ENCODE measurements at regions of chrX and their contacts with region 1.

Region 1: GRCh38 chrX:120250522-120251271 is at the start of gene ZBTB33:
- DNase-seq: peak; percentile 87
- H3K4me3 Mint-ChIP-seq: peak within 1 kb of the TSS; percentile 93
- H3K27ac Mint-ChIP-seq: peak within 1 kb of the TSS; percentile 94
- H3K4me1 Mint-ChIP-seq: peaks cover 29% of the 10 kb centered on the region
- H3K27me3 Mint-ChIP-seq: no peaks in the 10 kb centered on the region
- total RNA-seq, gene ZBTB33: 17.9 to 19.5 TPM

Region 2: DNA sequence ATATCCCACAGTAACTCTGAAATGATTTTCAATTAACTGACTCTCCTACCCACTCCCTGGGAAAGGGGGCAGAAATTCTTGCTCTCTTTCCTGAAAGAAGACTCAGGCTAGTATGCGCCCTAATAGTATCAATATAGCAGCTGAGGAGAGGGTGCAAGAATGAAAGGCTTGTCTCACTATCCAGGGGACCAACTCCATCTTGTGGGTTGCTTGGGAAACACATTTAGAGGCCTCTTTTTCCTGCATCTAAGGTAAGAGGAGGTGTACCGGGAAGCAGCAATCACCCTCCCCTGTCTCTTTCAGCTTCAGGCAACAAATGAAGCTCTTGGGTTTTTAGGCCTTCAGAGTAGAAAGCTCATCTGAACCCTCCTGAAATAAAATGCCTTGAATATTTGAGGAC is 49.2 kb after region 1 on chrX:
- CTCF ChIA-PET with region 1: interaction called, 10 read pairs
- POLR2A ChIA-PET with region 1: interaction called, 9 read pairs
- DNase-seq: no peak
- H3K4me3 Mint-ChIP-seq: no peak overlapping the region
- H3K27ac Mint-ChIP-seq: no peak overlapping the region
- H3K4me1 Mint-ChIP-seq: peaks cover 32% of the 10 kb centered on the region
- H3K27me3 Mint-ChIP-seq: no peaks in the 10 kb centered on the region

Region 3: DNA sequence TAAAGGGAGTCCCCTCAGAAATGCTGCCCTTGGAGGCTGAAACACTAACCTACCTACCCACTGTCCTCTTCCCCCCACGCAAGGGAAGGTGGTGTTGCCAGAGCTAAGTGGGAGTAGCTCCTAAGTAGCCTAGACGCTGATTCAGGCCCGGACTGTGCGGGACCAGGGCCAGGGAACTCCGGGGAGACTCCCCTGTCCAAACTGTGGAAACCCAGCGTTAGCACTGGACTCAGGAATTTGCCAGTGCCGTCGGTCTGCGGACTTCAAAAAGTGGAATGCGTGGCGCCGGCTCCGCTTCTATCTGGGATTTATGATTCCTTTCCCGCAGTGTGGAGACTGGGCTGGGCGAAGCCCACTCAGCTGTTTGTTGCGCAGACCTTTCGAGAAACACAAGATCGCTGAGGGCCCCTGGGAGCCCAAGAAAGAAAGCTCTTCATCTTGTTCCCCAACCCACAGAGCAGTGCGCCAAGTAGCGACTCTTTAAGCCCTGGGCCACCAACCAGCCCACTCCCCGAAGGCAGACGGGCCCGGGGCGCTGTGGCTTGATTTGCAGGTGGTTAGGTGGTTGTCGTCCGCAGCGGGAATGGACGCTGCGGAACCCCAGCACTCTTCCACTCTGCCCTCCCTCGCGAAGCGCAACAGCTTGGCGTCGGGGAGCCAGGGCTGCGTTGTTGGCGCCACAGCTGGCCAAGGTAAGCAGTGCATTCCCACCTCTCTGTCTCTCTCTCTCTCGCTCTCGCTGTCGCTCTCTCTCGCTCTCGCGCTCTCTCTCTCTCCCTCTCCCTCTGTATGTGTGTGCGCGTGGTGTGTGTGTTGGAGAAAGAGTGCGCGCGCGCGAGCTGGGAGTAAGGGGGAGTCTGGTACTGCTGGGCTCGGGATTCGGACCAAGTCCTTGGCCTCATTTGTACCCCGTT is 58.5 kb after region 1 on chrX:
- CTCF ChIA-PET with region 1: interaction called, 15 read pairs
- POLR2A ChIA-PET with region 1: interaction called, 16 read pairs
- DNase-seq: peak; percentile 78
- H3K4me3 Mint-ChIP-seq: peak overlapping the region; percentile 71
- H3K27ac Mint-ChIP-seq: peak overlapping the region; percentile 40
- H3K4me1 Mint-ChIP-seq: peaks cover 41% of the 10 kb centered on the region
- H3K27me3 Mint-ChIP-seq: peaks cover 50% of the 10 kb centered on the region